ENCODE measurements at regions of chr20 and their contacts with region 1.

Region 1: DNA sequence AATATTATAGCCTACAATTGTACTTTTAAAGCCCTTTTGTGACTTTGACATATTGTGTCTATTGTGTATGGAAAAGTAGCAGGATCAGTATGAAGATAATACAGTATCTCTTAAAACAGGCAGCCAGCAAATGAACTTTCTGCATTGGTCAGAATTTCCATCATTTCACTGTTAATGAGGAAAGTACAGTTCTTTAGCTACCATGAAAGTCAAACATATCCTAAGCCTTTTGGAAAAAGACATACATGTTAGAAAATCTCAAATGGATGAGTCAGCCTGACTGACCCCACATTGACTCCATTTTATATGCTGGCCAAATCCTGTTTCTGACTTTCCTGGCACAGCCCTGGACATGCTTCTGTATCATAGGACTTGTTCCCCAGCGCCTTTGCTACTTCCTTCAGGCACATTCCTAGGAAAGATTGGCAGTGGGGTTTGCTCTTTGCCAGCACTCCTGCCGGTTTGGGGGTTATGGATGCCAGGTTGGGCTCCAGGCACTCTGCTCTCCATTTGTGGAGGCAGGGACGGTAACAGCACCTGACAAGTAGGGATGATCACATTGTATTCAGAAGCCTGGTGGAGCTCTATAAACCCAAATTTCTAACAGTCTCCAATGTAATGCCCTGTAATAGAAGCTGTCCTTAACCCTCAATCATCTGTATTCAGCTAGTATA is 43.7 kb downstream of the TOP1 start:
- DNase-seq: peak; percentile 82
- H3K4me3 Mint-ChIP-seq: no peak overlapping the region
- H3K27ac Mint-ChIP-seq: peak overlapping the region; percentile 43
- H3K4me1 Mint-ChIP-seq: peaks cover 27% of the 10 kb centered on the region
- H3K27me3 Mint-ChIP-seq: no peaks in the 10 kb centered on the region
- CTCF ChIP-seq: no peak

Region 2: DNA sequence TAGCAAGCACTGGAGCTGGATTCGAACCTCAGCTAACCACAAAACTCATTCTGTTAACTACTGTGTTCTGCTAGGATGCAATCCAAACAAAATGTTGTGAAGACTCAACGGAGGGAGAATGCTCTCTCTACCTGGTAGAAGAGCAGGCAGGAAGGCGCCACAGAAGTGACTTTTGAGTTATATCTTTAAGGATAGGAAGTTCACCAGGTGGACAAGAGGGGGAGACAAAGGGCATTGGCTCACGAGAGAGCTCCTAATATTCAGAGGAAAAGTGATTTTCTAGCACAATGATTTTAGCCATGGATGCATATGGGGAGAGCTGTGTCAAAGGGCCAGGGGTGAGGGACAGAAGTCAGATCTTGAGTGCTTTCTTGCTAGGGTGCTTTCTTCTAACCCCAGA is 274.9 kb before region 1 on chr20:
- CTCF ChIA-PET with region 1: no interaction called
- POLR2A ChIA-PET with region 1: no interaction called
- intact Hi-C with region 1: no loop called
- DNase-seq: peak; percentile 36
- H3K4me3 Mint-ChIP-seq: no peak overlapping the region
- H3K27ac Mint-ChIP-seq: no peak overlapping the region
- H3K4me1 Mint-ChIP-seq: peaks cover 5% of the 10 kb centered on the region
- H3K27me3 Mint-ChIP-seq: peaks cover 8% of the 10 kb centered on the region
- CTCF ChIP-seq: peak; percentile 23

Region 3: DNA sequence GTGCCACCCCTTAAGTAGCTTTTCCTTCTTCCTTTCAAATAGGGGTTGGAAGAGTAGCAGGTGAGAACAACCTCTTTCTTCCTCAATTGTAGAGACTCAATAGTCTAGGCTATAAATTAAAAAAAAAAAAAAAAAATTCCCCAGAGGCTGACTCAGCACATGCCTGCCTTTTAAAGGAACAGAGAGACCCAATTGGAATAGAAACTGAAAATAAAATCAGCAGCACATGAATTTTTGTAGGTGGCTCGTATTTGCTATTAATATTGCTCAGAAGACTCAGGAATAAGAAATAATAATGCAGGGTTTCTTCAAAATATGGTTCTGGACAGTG is 24.4 kb before region 1 on chr20:
- CTCF ChIA-PET with region 1: interaction called, 6 read pairs
- POLR2A ChIA-PET with region 1: interaction called, 17 read pairs
- intact Hi-C with region 1: no loop called
- DNase-seq: peak; percentile 39
- H3K4me3 Mint-ChIP-seq: peak overlapping the region; percentile 73
- H3K27ac Mint-ChIP-seq: peak overlapping the region; percentile 5
- H3K4me1 Mint-ChIP-seq: peaks cover 66% of the 10 kb centered on the region
- H3K27me3 Mint-ChIP-seq: no peaks in the 10 kb centered on the region
- CTCF ChIP-seq: no peak

Region 4: GRCh38 chr20:41057999-41058896 is 14.1 kb before region 1 on chr20:
- CTCF ChIA-PET with region 1: interaction called, 8 read pairs
- POLR2A ChIA-PET with region 1: interaction called, 16 read pairs
- intact Hi-C with region 1: no loop called
- DNase-seq: peak; percentile 68
- H3K4me3 Mint-ChIP-seq: no peak overlapping the region
- H3K27ac Mint-ChIP-seq: no peak overlapping the region
- H3K4me1 Mint-ChIP-seq: peaks cover 42% of the 10 kb centered on the region
- H3K27me3 Mint-ChIP-seq: no peaks in the 10 kb centered on the region
- CTCF ChIP-seq: no peak

Measured in MCF 10A (cell line).